A549 (cell line): ENCODE measurements at regions of chr18 and their contacts with region 1.

Region 1: DNA sequence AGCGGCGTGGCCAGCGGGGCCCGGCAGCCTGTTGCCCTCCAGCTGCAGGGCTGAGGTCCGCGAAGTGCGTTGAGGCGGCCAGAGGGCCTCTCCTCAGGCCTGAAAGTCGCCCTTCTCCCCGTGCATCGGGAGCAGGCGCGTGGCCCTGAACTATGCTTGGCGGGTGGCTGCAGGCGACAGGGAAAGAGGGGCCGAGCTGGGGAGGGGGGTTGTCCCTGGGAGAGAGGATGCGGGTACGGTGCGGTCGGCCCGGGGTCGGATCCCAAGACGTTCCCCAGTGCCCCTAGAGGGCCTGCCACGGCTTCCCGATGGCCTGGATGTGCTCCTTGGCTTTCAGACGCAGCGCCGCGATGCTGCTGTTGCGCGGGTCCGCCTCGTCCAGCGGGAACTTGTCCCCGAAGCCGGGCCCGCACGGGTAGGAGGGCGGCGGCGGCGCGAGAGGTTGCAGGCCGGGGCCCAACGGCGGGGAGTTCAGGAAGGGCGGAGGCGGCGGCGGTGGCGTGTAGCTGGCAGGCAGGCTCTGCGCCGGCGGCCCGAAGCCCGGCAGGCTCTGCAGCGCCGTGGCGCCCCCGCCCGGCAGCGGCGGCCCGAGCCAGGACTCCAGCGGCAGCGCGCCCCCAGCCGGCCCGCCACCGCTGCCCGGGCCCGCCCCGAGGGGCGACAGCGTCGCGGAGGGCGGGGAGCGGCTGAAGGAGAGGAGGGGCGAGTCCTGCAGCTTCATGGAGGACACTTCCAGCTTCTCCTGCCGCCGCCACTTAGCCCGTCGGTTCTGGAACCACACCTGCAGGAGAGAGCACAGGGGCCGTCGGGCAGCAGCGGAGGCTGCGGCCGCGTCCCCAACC is 4.3 kb downstream of the RAX start:
- DNase-seq: peak; percentile 57 to 58
- ATAC-seq: peak; percentile 68 to 79
- H3K4me3 ChIP-seq: peak overlapping the region; percentile 45
- H3K27ac ChIP-seq: peak overlapping the region in 1 of 2 experiments; percentile 51; a peak in 3 of 6 replicates
- H3K4me1 ChIP-seq: no peaks in the 10 kb centered on the region
- CTCF ChIP-seq: peak; percentile 63
- EP300 ChIP-seq: no peak
- POLR2A ChIP-seq: no peak
- RAD21 ChIP-seq: peak in 1 of 2 experiments; percentile 30; a peak in 3 of 5 replicates

Region 2: GRCh38 chr18:59085797-59086196 is 183.1 kb before region 1 on chr18:
- CTCF ChIA-PET with region 1: interaction called, 11 read pairs
- POLR2A ChIA-PET with region 1: no interaction called
- DNase-seq: no peak
- ATAC-seq: no peak
- H3K4me3 ChIP-seq: no peak overlapping the region
- H3K27ac ChIP-seq: no peak overlapping the region
- H3K4me1 ChIP-seq: no peaks in the 10 kb centered on the region; the same call in 2 of the 3 replicates
- CTCF ChIP-seq: no peak
- EP300 ChIP-seq: no peak
- POLR2A ChIP-seq: no peak
- RAD21 ChIP-seq: no peak

Region 3: DNA sequence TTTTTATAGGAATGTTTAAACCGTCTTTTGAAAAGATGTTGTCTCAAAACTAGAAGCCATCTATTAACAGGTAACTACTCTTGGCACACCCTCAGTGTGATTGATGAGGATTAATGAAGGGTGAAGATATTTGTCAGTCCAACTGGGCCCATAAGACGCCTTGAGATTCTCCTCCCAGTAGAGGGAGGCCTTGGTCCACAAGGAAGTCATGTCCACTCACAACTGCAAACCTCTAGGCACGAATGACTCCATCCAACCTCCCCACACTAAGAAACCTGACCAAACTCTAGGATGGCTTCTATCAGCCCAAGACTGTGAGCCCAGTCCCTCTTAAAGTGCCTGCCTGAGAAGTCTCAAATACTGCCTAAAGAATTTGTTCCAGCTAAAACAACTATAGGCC is 68.2 kb before region 1 on chr18:
- CTCF ChIA-PET with region 1: no interaction called
- POLR2A ChIA-PET with region 1: no interaction called
- DNase-seq: peak in 1 of 2 experiments; percentile 9
- ATAC-seq: no peak
- H3K4me3 ChIP-seq: no peak overlapping the region
- H3K27ac ChIP-seq: no peak overlapping the region
- H3K4me1 ChIP-seq: no peaks in the 10 kb centered on the region
- CTCF ChIP-seq: no peak
- EP300 ChIP-seq: no peak
- POLR2A ChIP-seq: no peak
- RAD21 ChIP-seq: no peak

Region 4: DNA sequence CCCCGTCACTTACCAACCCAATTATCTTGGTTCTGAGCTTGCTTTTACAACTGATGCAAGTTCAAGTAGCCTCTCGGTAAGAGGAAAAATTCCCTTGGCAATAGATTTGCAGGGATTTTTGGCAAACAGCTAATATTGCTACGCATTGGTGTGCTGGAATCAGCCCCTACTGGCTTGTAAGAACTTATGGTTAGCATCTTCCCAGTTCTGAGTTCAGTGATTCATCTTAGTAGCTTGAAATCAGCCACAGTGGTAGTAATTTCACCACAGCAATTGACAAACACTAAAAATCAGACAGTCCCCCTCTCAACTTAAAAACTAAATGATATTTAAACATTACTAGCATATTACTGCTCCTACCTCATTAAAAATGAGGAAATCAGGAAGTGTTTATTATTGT is 10.3 kb after region 1 on chr18:
- CTCF ChIA-PET with region 1: interaction called, 17 read pairs
- POLR2A ChIA-PET with region 1: no interaction called
- DNase-seq: no peak
- ATAC-seq: no peak
- H3K4me3 ChIP-seq: no peak overlapping the region
- H3K27ac ChIP-seq: no peak overlapping the region
- H3K4me1 ChIP-seq: no peaks in the 10 kb centered on the region
- CTCF ChIP-seq: no peak
- EP300 ChIP-seq: no peak
- POLR2A ChIP-seq: no peak
- RAD21 ChIP-seq: no peak

Region 5: GRCh38 chr18:59293317-59293716 is 24.4 kb after region 1 on chr18:
- CTCF ChIA-PET with region 1: no interaction called
- POLR2A ChIA-PET with region 1: no interaction called
- DNase-seq: no peak
- ATAC-seq: no peak
- H3K4me3 ChIP-seq: no peak overlapping the region
- H3K27ac ChIP-seq: no peak overlapping the region
- H3K4me1 ChIP-seq: no peaks in the 10 kb centered on the region
- CTCF ChIP-seq: no peak
- EP300 ChIP-seq: no peak
- POLR2A ChIP-seq: no peak
- RAD21 ChIP-seq: no peak